Common myeloid progenitor, CD34-positive (primary cell): ENCODE measurements at regions of chr15 and their contacts with region 1.

Region 1: DNA sequence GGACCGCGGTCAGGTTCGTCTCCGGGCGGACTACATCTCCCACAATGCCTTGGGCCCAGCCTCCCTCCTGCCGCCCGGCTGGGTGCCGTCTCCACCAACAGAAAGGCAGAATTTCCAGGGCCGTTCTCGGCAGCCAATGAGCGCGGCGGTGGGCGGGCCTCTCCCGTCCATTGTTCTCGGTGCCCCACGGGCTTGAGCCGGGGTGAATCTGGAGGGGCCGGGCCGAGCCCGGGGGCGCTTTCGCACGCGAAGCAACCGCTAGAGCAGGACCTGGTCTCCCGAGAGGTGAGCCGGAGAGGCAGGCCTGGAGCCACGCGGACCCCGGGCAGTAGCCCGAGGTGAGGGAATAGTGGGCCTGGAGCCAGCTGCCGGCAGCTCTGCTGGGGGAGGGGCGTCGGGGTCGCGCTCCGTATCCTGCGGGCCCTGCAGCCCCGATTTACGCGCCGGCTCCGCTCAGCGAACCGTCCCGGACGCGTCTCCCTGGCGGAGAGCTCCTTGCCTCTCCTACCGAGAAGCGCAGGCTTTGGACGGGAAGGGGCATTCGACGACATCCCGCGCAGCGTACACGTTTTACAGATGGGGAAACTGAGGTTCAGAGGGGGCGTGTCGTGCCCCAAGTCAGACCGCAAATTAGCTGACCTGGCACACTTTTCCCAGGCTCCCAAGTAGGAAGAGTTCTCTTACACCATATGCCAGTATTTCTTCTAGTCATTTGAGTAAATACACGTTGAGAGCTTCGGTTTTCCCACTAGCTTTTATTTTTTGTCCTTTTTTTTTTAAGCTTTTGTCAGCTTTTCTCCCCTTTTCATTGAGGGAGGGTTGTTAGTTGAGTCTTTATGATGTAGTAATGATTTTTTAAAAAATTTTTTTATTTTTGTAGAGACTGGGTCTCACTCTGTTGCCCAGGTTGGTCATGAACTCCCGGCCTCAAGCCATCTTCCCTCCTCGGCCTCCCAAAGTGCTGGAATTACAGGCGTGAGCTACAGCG is at the start of gene ZSCAN2:
- DNase-seq: peak; percentile 92 to 97 (median 95)
- H3K4me3 ChIP-seq: peak within 1 kb of the TSS; percentile 70 to 96 (median 80)
- H3K27ac ChIP-seq: peak within 1 kb of the TSS; percentile 86 to 94
- H3K4me1 ChIP-seq: peaks cover 17 to 75% (median 65%) of the 10 kb centered on the region in 4 experiments
- H3K27me3 ChIP-seq: no peaks in the 10 kb centered on the region

Region 2: DNA sequence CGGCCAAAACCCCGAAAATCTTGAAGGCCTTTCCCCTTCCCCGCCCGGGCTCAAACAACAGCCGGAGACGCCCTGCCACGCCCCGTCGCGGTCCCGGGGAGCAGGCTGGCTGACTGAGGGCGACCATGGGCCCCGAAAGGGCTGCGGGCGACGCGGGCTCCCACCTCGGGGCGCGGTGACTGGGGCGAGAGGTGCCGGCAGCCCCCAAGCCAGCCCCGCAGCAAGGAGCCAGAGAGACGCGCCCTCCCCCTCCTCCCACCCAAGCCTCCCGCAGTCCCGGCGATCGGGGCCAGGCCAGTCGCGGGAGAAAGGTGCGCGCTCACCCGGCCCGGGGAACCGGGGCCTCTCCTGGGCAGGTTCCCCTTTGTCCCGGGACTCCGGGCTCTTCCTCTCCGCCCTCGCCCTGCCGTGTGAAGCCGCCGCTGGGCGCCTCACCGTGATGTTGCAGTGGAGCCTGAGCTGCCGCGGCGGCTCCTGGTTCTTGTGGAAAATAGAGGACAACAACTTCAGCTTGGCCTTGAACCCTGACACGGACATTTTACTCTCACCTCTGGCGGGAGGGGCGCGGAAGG is 30.9 kb before region 1 on chr15:
- CTCF ChIA-PET with region 1: interaction called, 16 read pairs
- POLR2A ChIA-PET with region 1: no interaction called
- DNase-seq: peak; percentile 43 to 70 (median 57)
- H3K4me3 ChIP-seq: peak overlapping the region; percentile 74 to 89 (median 79)
- H3K27ac ChIP-seq: peak overlapping the region; percentile 58 to 81
- H3K4me1 ChIP-seq: peaks cover 2 to 9% (median 6%) of the 10 kb centered on the region in 4 experiments
- H3K27me3 ChIP-seq: no peaks in the 10 kb centered on the region

Region 3: GRCh38 chr15:84623311-84623710 is 22.2 kb after region 1 on chr15:
- CTCF ChIA-PET with region 1: interaction called, 10 read pairs
- POLR2A ChIA-PET with region 1: no interaction called
- DNase-seq: no peak
- H3K4me3 ChIP-seq: no peak overlapping the region
- H3K27ac ChIP-seq: no peak overlapping the region
- H3K4me1 ChIP-seq: no peaks in the 10 kb centered on the region
- H3K27me3 ChIP-seq: no peaks in the 10 kb centered on the region

Region 4: DNA sequence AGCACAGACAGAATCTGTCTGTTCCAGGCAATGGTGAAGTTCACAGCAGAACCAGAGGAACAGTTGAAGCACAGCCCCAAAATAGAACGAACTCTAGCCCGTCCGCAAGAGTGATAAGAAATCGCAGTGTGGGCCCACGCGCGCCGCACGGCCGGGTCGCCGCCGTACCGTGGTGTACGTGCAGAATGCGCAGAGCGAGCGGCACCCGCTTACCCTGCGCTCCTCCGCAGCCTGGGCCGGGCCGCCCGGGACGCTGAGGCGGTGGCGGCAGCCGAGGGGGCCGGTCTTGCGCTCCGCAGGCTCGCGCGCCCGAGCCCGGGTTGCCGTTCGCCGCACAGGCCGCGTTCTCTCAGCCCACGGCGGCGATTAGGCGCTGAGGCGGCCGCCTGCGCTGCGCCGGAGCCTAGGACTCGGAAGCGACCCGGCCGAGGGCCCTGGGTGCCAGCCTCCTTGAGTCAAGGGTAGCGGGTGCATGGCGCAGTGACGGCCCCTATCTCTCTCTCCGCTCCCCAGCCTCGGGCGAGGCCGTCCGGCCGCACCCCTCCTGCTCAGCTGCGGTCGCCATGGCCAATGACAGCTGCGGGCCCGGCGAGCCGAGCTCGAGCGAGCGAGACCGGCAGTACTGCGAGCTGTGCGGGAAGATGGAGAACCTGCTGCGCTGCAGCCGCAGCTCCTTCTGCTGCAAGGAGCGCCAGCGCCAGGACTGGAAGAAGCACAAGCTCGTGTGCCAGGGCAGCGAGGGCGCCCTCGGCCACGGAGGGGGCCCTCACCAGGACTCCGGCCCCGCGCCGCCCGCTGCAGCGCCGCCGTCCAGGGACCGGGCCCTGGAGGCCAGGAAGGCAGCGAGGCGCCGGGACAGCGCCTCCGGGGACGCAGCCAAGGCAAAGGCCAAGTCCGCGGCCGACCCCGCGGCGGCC is 32.4 kb after region 1 on chr15:
- CTCF ChIA-PET with region 1: interaction called, 14 read pairs
- POLR2A ChIA-PET with region 1: interaction called, 4 read pairs
- DNase-seq: peak; percentile 67 to 87 (median 78)
- H3K4me3 ChIP-seq: peak overlapping the region; percentile 28 to 83 (median 68)
- H3K27ac ChIP-seq: peak overlapping the region; percentile 15 to 54
- H3K4me1 ChIP-seq: peaks cover 12 to 49% (median 36%) of the 10 kb centered on the region in 4 experiments
- H3K27me3 ChIP-seq: no peaks in the 10 kb centered on the region

Region 5: GRCh38 chr15:84658080-84658787 is 57.1 kb after region 1 on chr15 and contains the start of gene NMB:
- CTCF ChIA-PET with region 1: interaction called, 28 read pairs
- POLR2A ChIA-PET with region 1: no interaction called
- DNase-seq: peak; percentile 95 to 98 (median 97)
- H3K4me3 ChIP-seq: peak within 1 kb of the TSS; percentile 30 to 82 (median 65)
- H3K27ac ChIP-seq: peak within 1 kb of the TSS in 1 of 2 experiments; percentile 77
- H3K4me1 ChIP-seq: peaks cover 8 to 37% (median 25%) of the 10 kb centered on the region in 4 experiments
- H3K27me3 ChIP-seq: no peaks in the 10 kb centered on the region

Region 6: GRCh38 chr15:84725001-84725491 is 123.9 kb after region 1 on chr15:
- CTCF ChIA-PET with region 1: no interaction called
- POLR2A ChIA-PET with region 1: no interaction called
- DNase-seq: peak in 2 of 3 donors; percentile 21 to 38
- H3K4me3 ChIP-seq: no peak overlapping the region
- H3K27ac ChIP-seq: no peak overlapping the region
- H3K4me1 ChIP-seq: peaks cover 0 to 25% (median 7%) of the 10 kb centered on the region in 4 experiments
- H3K27me3 ChIP-seq: no peaks in the 10 kb centered on the region